ENCODE measurements at regions of chr11 and their contacts with region 1.

Region 1: GRCh38 chr11:59753650-59754493 is 1.3 kb upstream of the STX3 start:
- DNase-seq: peak; percentile 72 to 96 (median 88)
- ATAC-seq: peak; percentile 78
- H3K4me3 ChIP-seq: peak overlapping the region; percentile 94 to 97
- H3K27ac ChIP-seq: peak overlapping the region; percentile 97 to 98
- H3K4me1 ChIP-seq: peaks cover 4 to 29% of the 10 kb centered on the region in 2 donors
- H3K27me3 ChIP-seq: no peaks in the 10 kb centered on the region
- CTCF ChIP-seq: peak; percentile 92 to 97

Region 2: GRCh38 chr11:59523541-59523940 is 230.3 kb before region 1 on chr11:
- intact Hi-C with region 1: no loop called
- DNase-seq: no peak
- ATAC-seq: no peak
- H3K4me3 ChIP-seq: no peak overlapping the region
- H3K27ac ChIP-seq: no peak overlapping the region
- H3K4me1 ChIP-seq: no peaks in the 10 kb centered on the region
- H3K27me3 ChIP-seq: no peaks in the 10 kb centered on the region
- CTCF ChIP-seq: no peak

Region 3: GRCh38 chr11:59802639-59803176 is 48.8 kb after region 1 on chr11:
- intact Hi-C with region 1: loop called in 1 of 2 experiments (anchors 2 kb)
- DNase-seq: peak in 2 of 4 donors; percentile 42 to 59
- ATAC-seq: peak; percentile 87
- H3K4me3 ChIP-seq: no peak overlapping the region
- H3K27ac ChIP-seq: no peak overlapping the region
- H3K4me1 ChIP-seq: peaks cover 0 to 7% of the 10 kb centered on the region in 2 donors
- H3K27me3 ChIP-seq: no peaks in the 10 kb centered on the region
- CTCF ChIP-seq: peak; percentile 50 to 64